ENCODE measurements at regions of chr1 and their contacts with region 1.

Region 1: GRCh38 chr1:66446261-66447001 is 87.5 kb upstream of the SGIP1 start:
- DNase-seq: peak in 2 of 6 donors; percentile 7 to 13
- ATAC-seq: peak; percentile 73 to 93 (median 90)
- H3K4me3 ChIP-seq: no peak overlapping the region
- H3K27ac ChIP-seq: no peak overlapping the region
- H3K4me1 ChIP-seq: peaks cover 0 to 4% (median 0%) of the 10 kb centered on the region in 3 donors
- H3K27me3 ChIP-seq: no peaks in the 10 kb centered on the region
- CTCF ChIP-seq: peak; percentile 58 to 80 (median 68)

Region 2: DNA sequence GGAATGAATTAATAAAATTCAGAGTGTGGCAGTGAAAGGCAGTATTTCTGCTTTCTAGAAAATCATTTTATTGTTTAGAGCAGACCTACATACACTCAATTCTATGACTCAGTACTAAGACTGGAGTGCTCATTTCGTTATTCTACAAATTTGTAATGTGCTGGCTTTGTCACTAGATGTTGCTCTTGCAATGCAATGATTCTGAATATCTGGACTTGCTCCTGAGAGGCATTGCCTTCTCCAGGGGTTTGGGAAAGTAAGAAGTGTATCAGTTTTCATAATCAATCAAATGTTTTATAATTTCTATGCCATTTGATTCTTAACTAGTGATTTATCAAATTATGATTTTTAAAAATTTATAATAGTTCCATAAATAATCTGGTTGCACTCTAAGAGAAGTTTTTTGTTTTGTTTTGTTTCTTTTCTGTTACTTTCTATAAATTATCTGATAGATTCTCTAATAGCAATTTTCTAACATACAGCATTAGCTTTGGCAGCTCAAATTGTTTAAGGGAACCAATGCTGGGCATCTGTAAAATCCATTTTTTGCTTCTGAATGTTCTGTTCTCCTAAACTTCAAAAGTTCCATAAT is 193.0 kb before region 1 on chr1:
- intact Hi-C with region 1: loop called (anchors 5 to 10 kb)
- DNase-seq: no peak
- ATAC-seq: peak; percentile 74 to 95 (median 93)
- H3K4me3 ChIP-seq: no peak overlapping the region
- H3K27ac ChIP-seq: no peak overlapping the region
- H3K4me1 ChIP-seq: no peaks in the 10 kb centered on the region
- H3K27me3 ChIP-seq: peaks cover 0 to 18% (median 0%) of the 10 kb centered on the region in 4 donors
- CTCF ChIP-seq: peak in 3 of 4 donors; percentile 40 to 47 (median 43)

Region 3: GRCh38 chr1:66258404-66259105 is 187.9 kb before region 1 on chr1:
- intact Hi-C with region 1: loop called in 2 of 3 experiments (anchors 5 kb)
- DNase-seq: no peak
- ATAC-seq: no peak
- H3K4me3 ChIP-seq: no peak overlapping the region
- H3K27ac ChIP-seq: no peak overlapping the region
- H3K4me1 ChIP-seq: no peaks in the 10 kb centered on the region
- H3K27me3 ChIP-seq: no peaks in the 10 kb centered on the region
- CTCF ChIP-seq: no peak

Region 4: DNA sequence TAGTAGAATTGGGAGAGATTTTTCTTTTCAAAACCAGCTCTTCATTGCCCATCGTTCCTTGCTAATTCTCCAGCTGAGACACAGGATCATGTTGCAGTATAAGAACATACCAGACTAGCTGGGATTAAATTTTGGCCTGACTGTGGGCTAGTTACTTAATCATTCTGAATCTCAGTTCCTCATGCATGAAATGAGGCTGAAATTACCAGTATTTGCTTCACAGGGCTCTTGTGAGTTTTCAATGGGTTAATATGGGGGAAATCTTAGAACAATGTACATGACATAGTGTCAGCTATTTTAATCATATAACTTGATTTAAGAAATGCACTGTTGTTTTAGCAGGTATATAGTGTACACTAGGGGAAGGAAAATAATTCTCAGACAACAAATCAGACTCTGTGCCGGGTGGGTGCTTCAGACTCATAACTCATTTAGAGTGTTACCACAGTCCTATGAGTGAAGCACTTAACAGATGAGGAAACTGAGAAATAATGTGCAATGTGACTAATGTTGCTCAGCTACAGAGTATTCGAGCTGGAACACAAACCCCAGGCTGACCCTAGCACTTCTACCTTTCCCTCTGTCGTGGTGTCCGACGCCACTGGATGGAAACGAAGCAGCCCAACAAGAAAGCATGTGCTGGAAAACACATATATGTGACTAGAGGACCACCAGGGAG is 50.1 kb before region 1 on chr1:
- intact Hi-C with region 1: no loop called
- DNase-seq: no peak
- ATAC-seq: peak in 2 of 4 donors; percentile 36 to 56
- H3K4me3 ChIP-seq: no peak overlapping the region
- H3K27ac ChIP-seq: peak overlapping the region in 1 of 4 donors; percentile 16
- H3K4me1 ChIP-seq: no peaks in the 10 kb centered on the region
- H3K27me3 ChIP-seq: no peaks in the 10 kb centered on the region
- CTCF ChIP-seq: no peak